H1 (cell line): ENCODE measurements at regions of chr10 and their contacts with region 1.

Region 1: DNA sequence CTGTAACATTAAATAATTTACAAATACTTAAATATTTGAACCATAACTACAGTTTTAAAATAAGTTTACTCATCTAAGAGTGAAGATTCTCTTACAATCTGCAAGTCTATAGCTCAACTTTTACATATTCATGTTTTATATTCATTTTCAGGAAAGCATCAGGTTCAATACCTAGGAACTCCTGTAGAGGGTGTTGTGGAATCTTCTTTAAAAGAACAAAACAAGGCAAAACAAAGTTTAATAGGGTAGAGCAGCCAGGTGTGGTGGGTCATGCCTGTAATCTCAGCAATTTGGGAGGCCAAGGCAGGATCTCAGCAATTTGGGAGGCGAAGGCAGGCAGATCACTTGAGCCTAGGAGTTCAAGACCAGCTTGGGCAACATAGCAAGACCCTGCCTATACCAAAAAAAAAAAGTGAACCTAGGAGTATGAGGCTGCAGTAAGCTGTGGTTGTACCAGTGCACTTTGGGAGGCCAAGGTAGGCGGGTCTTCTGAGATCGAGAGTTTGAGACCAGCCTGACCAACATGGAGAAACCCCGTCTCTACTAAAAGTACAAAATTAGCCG is 45.1 kb downstream of the ST8SIA6 start:
- DNase-seq: no peak
- H3K4me3 ChIP-seq: no peak overlapping the region
- H3K27ac ChIP-seq: no peak overlapping the region
- H3K4me1 ChIP-seq: peaks cover 0 to 6% (median 4%) of the 10 kb centered on the region in 4 experiments; a peak in 5 of 7 replicates
- H3K27me3 ChIP-seq: no peaks in the 10 kb centered on the region
- CTCF ChIP-seq: peak in 2 of 3 experiments; percentile 19 to 45; a peak in 2 of 4 replicates
- EP300 ChIP-seq: no peak
- POLR2A ChIP-seq: no peak
- RAD21 ChIP-seq: peak; percentile 26 to 44

Region 2: DNA sequence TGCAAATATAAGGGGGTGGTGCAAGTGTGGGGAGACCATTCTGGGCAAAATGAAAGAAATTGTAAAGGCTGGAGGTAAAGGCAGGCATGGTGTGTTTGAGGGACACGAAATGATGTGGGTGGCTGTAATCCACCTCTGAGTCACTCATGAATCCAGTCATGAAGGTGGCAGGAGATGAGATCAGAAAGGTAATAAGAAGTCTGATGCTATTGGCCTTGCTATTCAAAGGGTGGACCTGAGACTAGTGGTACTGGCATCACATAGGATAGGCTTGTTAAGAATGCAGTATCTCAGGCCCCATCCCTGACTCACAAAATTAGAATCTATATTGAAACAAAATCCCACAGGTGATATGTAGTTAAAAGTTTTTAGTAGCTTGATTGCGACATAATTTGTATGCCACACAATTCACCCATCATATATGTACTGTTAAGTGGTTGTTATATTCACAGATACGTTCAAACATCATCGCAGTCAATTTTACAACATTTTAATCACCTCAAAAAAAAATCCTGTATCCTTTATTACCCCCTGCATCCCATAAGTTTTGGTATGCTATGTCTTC is 40.5 kb before region 1 on chr10:
- CTCF ChIA-PET with region 1: interaction called, 13 read pairs
- POLR2A ChIA-PET with region 1: no interaction called
- DNase-seq: no peak
- H3K4me3 ChIP-seq: no peak overlapping the region
- H3K27ac ChIP-seq: no peak overlapping the region
- H3K4me1 ChIP-seq: no peaks in the 10 kb centered on the region
- H3K27me3 ChIP-seq: peaks cover 0 to 1% (median 0%) of the 10 kb centered on the region in 4 experiments; a peak in 1 of 7 replicates
- CTCF ChIP-seq: no peak
- EP300 ChIP-seq: no peak
- POLR2A ChIP-seq: no peak
- RAD21 ChIP-seq: no peak

Region 3: GRCh38 chr10:17387861-17388508 is 21.3 kb before region 1 on chr10:
- CTCF ChIA-PET with region 1: interaction called, 12 read pairs
- POLR2A ChIA-PET with region 1: no interaction called
- DNase-seq: no peak
- H3K4me3 ChIP-seq: no peak overlapping the region
- H3K27ac ChIP-seq: no peak overlapping the region
- H3K4me1 ChIP-seq: peaks cover 0 to 4% (median 0%) of the 10 kb centered on the region in 4 experiments; a peak in 2 of 7 replicates
- H3K27me3 ChIP-seq: no peaks in the 10 kb centered on the region
- CTCF ChIP-seq: no peak
- EP300 ChIP-seq: no peak
- POLR2A ChIP-seq: no peak
- RAD21 ChIP-seq: no peak

Region 4: DNA sequence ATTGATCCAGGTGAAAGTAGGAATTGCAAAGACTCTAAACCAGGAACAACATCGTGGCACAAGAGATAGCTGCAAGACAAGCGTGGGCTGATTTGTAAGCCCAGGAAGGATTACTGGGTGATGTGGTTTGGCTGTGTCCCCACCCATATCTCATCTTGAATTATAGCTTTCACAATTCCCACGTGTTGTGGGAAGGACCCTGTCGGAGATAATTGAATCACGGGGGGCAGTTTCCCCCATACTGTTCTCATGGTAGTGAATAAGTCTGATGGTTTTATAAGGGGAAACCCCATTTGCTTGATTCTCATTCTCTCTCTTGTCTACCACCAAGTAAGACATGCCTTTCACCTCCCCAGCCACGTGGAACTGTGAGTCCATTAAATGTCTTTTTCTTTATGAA is 14.4 kb before region 1 on chr10:
- CTCF ChIA-PET with region 1: interaction called, 17 read pairs
- POLR2A ChIA-PET with region 1: interaction called, 3 read pairs
- DNase-seq: no peak
- H3K4me3 ChIP-seq: no peak overlapping the region
- H3K27ac ChIP-seq: no peak overlapping the region
- H3K4me1 ChIP-seq: no peaks in the 10 kb centered on the region
- H3K27me3 ChIP-seq: no peaks in the 10 kb centered on the region
- CTCF ChIP-seq: no peak
- EP300 ChIP-seq: no peak
- POLR2A ChIP-seq: no peak
- RAD21 ChIP-seq: no peak

Region 5: DNA sequence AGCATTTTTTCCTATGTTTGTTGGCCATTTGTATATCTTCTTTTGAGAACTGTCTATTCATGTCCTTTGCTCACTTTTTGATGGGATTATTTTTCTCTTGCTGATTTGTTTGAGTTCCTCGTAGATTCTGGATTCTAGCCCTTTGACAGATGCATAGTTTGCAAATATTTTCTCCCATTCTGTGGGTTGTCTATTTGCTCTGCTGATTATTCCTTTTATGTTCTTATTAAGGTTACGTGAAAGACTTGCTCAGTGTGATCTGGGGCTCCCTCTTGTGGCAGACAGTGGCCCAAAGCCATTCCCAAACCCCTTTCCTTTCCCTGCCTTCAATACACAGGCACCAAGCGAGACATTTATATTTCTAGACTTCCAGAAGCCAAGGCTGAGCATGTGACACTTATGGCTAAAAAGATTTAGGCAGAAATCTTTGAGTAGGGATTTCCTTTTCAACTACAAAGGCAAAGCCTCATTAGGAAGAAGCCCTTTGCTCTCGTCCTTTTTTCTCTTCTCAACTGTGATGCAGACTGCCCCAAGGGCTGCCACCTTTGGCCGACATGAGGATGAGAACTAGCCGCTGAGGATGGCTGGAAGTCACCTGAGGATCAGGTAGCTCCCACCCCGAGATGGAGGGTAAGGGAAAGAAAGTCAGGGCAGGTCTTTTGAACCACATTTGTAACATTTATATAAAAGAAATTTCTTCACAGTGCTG is 21.5 kb after region 1 on chr10:
- CTCF ChIA-PET with region 1: interaction called, 12 read pairs
- POLR2A ChIA-PET with region 1: no interaction called
- DNase-seq: peak in 1 of 2 experiments; percentile 83
- H3K4me3 ChIP-seq: no peak overlapping the region
- H3K27ac ChIP-seq: no peak overlapping the region
- H3K4me1 ChIP-seq: peaks cover 0 to 2% (median 0%) of the 10 kb centered on the region in 4 experiments; a peak in 1 of 7 replicates
- H3K27me3 ChIP-seq: no peaks in the 10 kb centered on the region
- CTCF ChIP-seq: peak; percentile 69 to 87 (median 77)
- EP300 ChIP-seq: no peak
- POLR2A ChIP-seq: no peak
- RAD21 ChIP-seq: peak; percentile 76 to 77